Naive thymus-derived CD4-positive, alpha-beta T cell (primary cell): ENCODE measurements at regions of chr22 and their contacts with region 1.

Region 1: GRCh38 chr22:20495861-20496681 is 476 bp upstream of the KLHL22 start:
- DNase-seq: peak; percentile 82 to 97 (median 87)
- ATAC-seq: peak; percentile 98
- H3K4me3 ChIP-seq: peak overlapping the region; percentile 100
- H3K4me3 Mint-ChIP-seq: peak overlapping the region; percentile 88 to 98 (median 94)
- H3K27ac ChIP-seq: peak overlapping the region; percentile 85
- H3K27ac Mint-ChIP-seq: peak overlapping the region; percentile 89 to 95 (median 93)
- H3K4me1 ChIP-seq: peaks cover 7 to 41% of the 10 kb centered on the region in 2 donors
- H3K4me1 Mint-ChIP-seq: peaks cover 28 to 55% (median 49%) of the 10 kb centered on the region in 7 donors
- H3K27me3 ChIP-seq: no peaks in the 10 kb centered on the region
- H3K27me3 Mint-ChIP-seq: no peaks in the 10 kb centered on the region

Region 2: DNA sequence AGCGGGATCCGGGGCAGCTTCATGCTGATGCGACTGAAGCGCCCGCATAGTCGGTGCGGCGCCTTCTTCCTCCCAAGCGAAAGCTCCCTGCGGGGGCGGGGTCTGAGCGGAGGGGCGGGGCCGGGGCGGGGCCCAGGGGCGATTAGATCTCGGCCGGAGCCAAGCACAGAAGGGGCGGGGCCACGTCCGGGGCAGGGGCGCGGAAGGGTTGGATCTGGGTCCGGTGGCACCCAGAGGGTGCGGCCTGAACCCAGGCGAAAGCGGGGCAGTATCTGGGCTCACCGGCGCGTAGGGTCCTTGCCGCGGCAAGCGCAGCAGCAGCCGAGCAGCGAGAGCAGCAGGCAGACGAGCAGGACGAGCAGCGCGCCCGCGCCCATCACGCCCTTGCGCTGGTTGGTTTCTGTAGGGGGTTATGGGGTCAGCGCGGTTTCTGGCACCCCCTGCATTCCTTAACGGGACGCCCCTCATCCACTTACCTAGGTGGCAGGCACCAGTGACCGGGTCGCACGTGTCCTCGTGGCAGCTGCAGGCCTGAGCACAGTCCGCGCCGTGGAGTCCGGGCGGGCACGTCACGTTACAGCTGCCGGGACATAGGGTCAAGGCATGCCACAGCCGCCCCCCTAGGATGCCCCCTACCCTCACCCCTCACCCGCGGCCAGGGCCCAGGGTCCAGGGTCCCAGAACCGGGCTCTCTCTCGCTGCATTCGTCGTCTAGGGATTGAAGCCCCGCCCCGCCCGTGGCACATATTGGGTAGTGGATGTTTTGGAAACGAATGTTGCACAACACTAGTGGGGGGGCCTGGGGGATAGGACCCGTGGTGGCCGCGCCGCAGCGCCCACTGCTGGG is 66.6 kb before region 1 on chr22:
- CTCF ChIA-PET with region 1: interaction called, 4 read pairs
- POLR2A ChIA-PET with region 1: interaction called, 3 read pairs
- intact Hi-C with region 1: loop called (anchors 1 to 2 kb)
- DNase-seq: peak; percentile 56 to 86 (median 75)
- ATAC-seq: peak; percentile 87
- H3K4me3 ChIP-seq: peak overlapping the region; percentile 79
- H3K4me3 Mint-ChIP-seq: peak overlapping the region; percentile 82 to 96 (median 86)
- H3K27ac ChIP-seq: no peak overlapping the region
- H3K27ac Mint-ChIP-seq: peak overlapping the region; percentile 11 to 80 (median 62)
- H3K4me1 ChIP-seq: peaks cover 17 to 26% of the 10 kb centered on the region in 2 donors
- H3K4me1 Mint-ChIP-seq: peaks cover 6 to 22% (median 13%) of the 10 kb centered on the region in 7 donors
- H3K27me3 ChIP-seq: peaks cover 0 to 12% of the 10 kb centered on the region in 2 donors
- H3K27me3 Mint-ChIP-seq: peaks cover 18 to 66% (median 22%) of the 10 kb centered on the region in 5 donors

Region 3: GRCh38 chr22:20469110-20469868 is 26.8 kb before region 1 on chr22:
- CTCF ChIA-PET with region 1: interaction called, 4 read pairs
- POLR2A ChIA-PET with region 1: interaction called, 47 read pairs
- intact Hi-C with region 1: loop called in 1 of 2 experiments (anchors 1 kb)
- DNase-seq: no peak
- ATAC-seq: no peak
- H3K4me3 ChIP-seq: no peak overlapping the region
- H3K4me3 Mint-ChIP-seq: peak overlapping the region in 4 of 10 donors; percentile 2 to 66 (median 26)
- H3K27ac ChIP-seq: no peak overlapping the region
- H3K27ac Mint-ChIP-seq: peak overlapping the region; percentile 1 to 99 (median 82)
- H3K4me1 ChIP-seq: peaks cover 16 to 31% of the 10 kb centered on the region in 2 donors
- H3K4me1 Mint-ChIP-seq: peaks cover 19 to 64% (median 45%) of the 10 kb centered on the region in 7 donors
- H3K27me3 ChIP-seq: no peaks in the 10 kb centered on the region
- H3K27me3 Mint-ChIP-seq: no peaks in the 10 kb centered on the region

Region 4: DNA sequence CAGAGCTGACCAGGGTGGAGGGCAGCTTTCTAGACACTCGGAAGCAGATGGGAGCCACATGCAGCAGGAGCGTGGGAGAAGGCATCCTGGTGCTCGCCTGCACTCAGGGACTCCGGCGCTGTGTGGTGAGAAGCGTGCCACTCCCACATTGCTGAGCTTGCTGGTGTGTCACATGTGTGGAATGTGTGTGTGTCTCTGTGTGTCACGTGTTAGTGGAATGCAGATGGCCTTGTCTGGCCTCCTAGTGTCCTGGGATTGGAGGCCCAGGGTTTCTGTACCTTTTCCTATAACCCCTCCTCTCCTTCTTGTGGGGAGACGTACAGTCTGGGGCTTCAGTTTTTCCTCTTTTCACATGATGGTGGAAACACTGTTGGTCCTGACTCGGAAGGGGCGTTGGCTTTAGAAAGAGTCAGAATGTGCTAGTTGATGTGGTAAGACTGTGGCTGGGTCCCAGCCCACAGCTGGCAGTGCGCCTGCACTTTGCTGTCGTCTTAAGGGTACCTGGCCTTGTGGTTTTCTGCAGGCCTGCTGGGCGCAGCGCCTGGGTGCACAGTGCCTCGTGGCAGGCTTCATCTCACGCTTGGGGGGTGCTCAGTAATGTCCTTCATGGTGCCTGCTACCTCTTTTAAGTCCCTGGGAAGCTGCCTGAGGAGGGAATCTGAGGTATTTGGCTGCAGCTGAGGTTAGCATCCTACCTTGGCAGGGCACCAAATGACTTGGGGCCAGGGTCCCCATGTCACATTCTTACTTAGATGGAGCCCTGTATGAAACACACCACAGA is 73.1 kb after region 1 on chr22:
- CTCF ChIA-PET with region 1: interaction called, 4 read pairs
- POLR2A ChIA-PET with region 1: interaction called, 4 read pairs
- intact Hi-C with region 1: loop called in 1 of 2 experiments (anchors 1 kb)
- DNase-seq: peak; percentile 56 to 91 (median 88)
- ATAC-seq: peak; percentile 82
- H3K4me3 ChIP-seq: peak overlapping the region; percentile 39
- H3K4me3 Mint-ChIP-seq: peak overlapping the region; percentile 79 to 88 (median 84)
- H3K27ac ChIP-seq: peak overlapping the region; percentile 46
- H3K27ac Mint-ChIP-seq: peak overlapping the region; percentile 92 to 99 (median 93)
- H3K4me1 ChIP-seq: peaks cover 76 to 81% of the 10 kb centered on the region in 2 donors
- H3K4me1 Mint-ChIP-seq: peaks cover 59 to 96% (median 80%) of the 10 kb centered on the region in 7 donors
- H3K27me3 ChIP-seq: no peaks in the 10 kb centered on the region
- H3K27me3 Mint-ChIP-seq: no peaks in the 10 kb centered on the region